ENCODE measurements at regions of chr6 and their contacts with region 1.

Region 1: GRCh38 chr6:166598441-166599138 is 12.1 kb upstream of the RAMACL start:
- DNase-seq: peak; percentile 92
- H3K4me3 ChIP-seq: no peak overlapping the region
- CTCF ChIP-seq: no peak

Region 2: GRCh38 chr6:165266191-165266590 is 1332.4 kb before region 1 on chr6:
- CTCF ChIA-PET with region 1: no interaction called
- POLR2A ChIA-PET with region 1: no interaction called
- DNase-seq: no peak
- H3K4me3 ChIP-seq: no peak overlapping the region
- CTCF ChIP-seq: no peak

Region 3: GRCh38 chr6:166387642-166388289 is 210.8 kb before region 1 on chr6:
- CTCF ChIA-PET with region 1: no interaction called
- POLR2A ChIA-PET with region 1: no interaction called
- DNase-seq: no peak
- H3K4me3 ChIP-seq: no peak overlapping the region
- CTCF ChIP-seq: no peak

Region 4: GRCh38 chr6:166615059-166615770 is 16.6 kb after region 1 on chr6:
- CTCF ChIA-PET with region 1: interaction called, 21 read pairs
- POLR2A ChIA-PET with region 1: no interaction called
- DNase-seq: no peak
- H3K4me3 ChIP-seq: no peak overlapping the region
- CTCF ChIP-seq: no peak